ENCODE measurements at regions of chr9 and their contacts with region 1.

Region 1: GRCh38 chr9:79604921-79605562 is 33.3 kb downstream of the TLE4 start:
- DNase-seq: no peak
- H3K4me3 ChIP-seq: no peak overlapping the region
- H3K27ac ChIP-seq: no peak overlapping the region
- H3K4me1 ChIP-seq: peaks cover 13% of the 10 kb centered on the region
- H3K27me3 ChIP-seq: no peaks in the 10 kb centered on the region
- CTCF ChIP-seq: no peak
- POLR2A ChIP-seq: no peak

Region 2: GRCh38 chr9:79489247-79489985 is 115.6 kb before region 1 on chr9:
- CTCF ChIA-PET with region 1: no interaction called
- POLR2A ChIA-PET with region 1: no interaction called
- dilution Hi-C with region 1: no loop called
- intact Hi-C with region 1: no loop called
- DNase-seq: no peak
- H3K4me3 ChIP-seq: no peak overlapping the region
- H3K27ac ChIP-seq: no peak overlapping the region
- H3K4me1 ChIP-seq: no peaks in the 10 kb centered on the region
- H3K27me3 ChIP-seq: no peaks in the 10 kb centered on the region
- CTCF ChIP-seq: no peak
- POLR2A ChIP-seq: no peak

Region 3: GRCh38 chr9:79623799-79624721 is 19.0 kb after region 1 on chr9:
- CTCF ChIA-PET with region 1: interaction called, 3 read pairs
- POLR2A ChIA-PET with region 1: no interaction called
- dilution Hi-C with region 1: no loop called
- intact Hi-C with region 1: loop called (anchors 1 kb)
- DNase-seq: peak; percentile 70
- H3K4me3 ChIP-seq: no peak overlapping the region
- H3K27ac ChIP-seq: peak overlapping the region; percentile 4
- H3K4me1 ChIP-seq: peaks cover 19% of the 10 kb centered on the region
- H3K27me3 ChIP-seq: no peaks in the 10 kb centered on the region
- CTCF ChIP-seq: no peak
- POLR2A ChIP-seq: no peak